H1 (cell line): ENCODE measurements at regions of chr21 and their contacts with region 1.

Region 1: DNA sequence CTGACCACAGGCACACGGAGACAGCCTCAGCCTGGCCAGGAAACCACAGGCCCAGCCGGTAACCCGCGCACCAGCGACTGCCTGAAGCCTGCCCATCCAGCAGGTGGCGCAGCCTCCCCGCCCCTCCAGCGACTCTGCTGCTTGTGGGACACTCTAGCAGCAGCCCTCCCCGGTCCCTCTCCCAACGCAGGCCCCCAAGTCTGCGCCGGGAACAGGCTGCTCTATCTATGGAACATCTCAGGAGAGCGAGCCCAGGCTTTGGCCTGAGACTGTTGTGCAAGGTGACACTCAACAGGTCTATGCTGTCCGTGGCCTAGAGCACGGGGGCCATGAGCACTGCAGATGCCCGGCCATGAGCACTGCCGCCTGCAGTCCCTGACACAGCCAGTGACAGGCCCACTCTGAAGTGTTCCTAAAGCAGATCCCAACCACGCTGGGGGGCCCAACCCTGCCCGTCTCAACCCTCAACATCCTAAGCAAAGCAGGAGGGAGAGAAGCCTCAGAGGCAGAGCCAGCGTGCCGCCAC is 28.4 kb downstream of the WDR4 start:
- DNase-seq: peak; percentile 44 to 91
- H3K4me3 ChIP-seq: no peak overlapping the region
- H3K27ac ChIP-seq: no peak overlapping the region
- H3K4me1 ChIP-seq: no peaks in the 10 kb centered on the region
- H3K27me3 ChIP-seq: no peaks in the 10 kb centered on the region
- CTCF ChIP-seq: peak in 2 of 3 experiments; percentile 87 to 92; a peak in 3 of 4 replicates
- EP300 ChIP-seq: no peak
- POLR2A ChIP-seq: 0 out of 3 replicates have a peak, but pooled peaks of 1 of the 2 experiments have one; percentile 44
- RAD21 ChIP-seq: peak; percentile 60 to 64; a peak in 3 of 4 replicates

Region 2: GRCh38 chr21:42864815-42865775 is 14.2 kb after region 1 on chr21:
- CTCF ChIA-PET with region 1: interaction called, 3 read pairs
- POLR2A ChIA-PET with region 1: interaction called, 11 read pairs
- DNase-seq: no peak
- H3K4me3 ChIP-seq: no peak overlapping the region
- H3K27ac ChIP-seq: no peak overlapping the region
- H3K4me1 ChIP-seq: no peaks in the 10 kb centered on the region; a peak in 1 of 7 replicates
- H3K27me3 ChIP-seq: no peaks in the 10 kb centered on the region
- CTCF ChIP-seq: peak in 1 of 3 experiments; percentile 15; a peak in 1 of 4 replicates
- EP300 ChIP-seq: no peak
- POLR2A ChIP-seq: no peak
- RAD21 ChIP-seq: no peak

Region 3: GRCh38 chr21:42923541-42924432 is 72.9 kb after region 1 on chr21:
- CTCF ChIA-PET with region 1: no interaction called
- POLR2A ChIA-PET with region 1: no interaction called
- DNase-seq: peak; percentile 82 to 88
- H3K4me3 ChIP-seq: peak overlapping the region in 3 of 4 experiments; percentile 5 to 19 (median 5); a peak in 3 of 8 replicates
- H3K27ac ChIP-seq: peak overlapping the region; percentile 62; the same call in 1 of the 2 replicates
- H3K4me1 ChIP-seq: peaks cover 11 to 18% (median 14%) of the 10 kb centered on the region in 4 experiments
- H3K27me3 ChIP-seq: no peaks in the 10 kb centered on the region
- CTCF ChIP-seq: peak; percentile 47 to 77 (median 68)
- EP300 ChIP-seq: peak in 1 of 2 experiments; percentile 66; a peak in 2 of 3 replicates
- POLR2A ChIP-seq: no peak
- RAD21 ChIP-seq: peak; percentile 94 to 97

Region 4: GRCh38 chr21:43001295-43001694 is 150.4 kb after region 1 on chr21:
- CTCF ChIA-PET with region 1: no interaction called
- POLR2A ChIA-PET with region 1: no interaction called
- DNase-seq: no peak
- H3K4me3 ChIP-seq: no peak overlapping the region
- H3K27ac ChIP-seq: no peak overlapping the region
- H3K4me1 ChIP-seq: peaks cover 0 to 2% (median 0%) of the 10 kb centered on the region in 4 experiments; a peak in 2 of 7 replicates
- H3K27me3 ChIP-seq: no peaks in the 10 kb centered on the region
- CTCF ChIP-seq: no peak
- EP300 ChIP-seq: no peak
- POLR2A ChIP-seq: no peak
- RAD21 ChIP-seq: no peak